ENCODE measurements at regions of chr7 and their contacts with region 1.

Region 1: GRCh38 chr7:152411389-152411788 is 24.4 kb downstream of the KMT2C start:
- DNase-seq: no peak
- ATAC-seq: peak in 3 of 4 donors; percentile 26 to 44 (median 27)
- H3K4me3 ChIP-seq: no peak overlapping the region
- H3K27ac ChIP-seq: no peak overlapping the region
- H3K4me1 ChIP-seq: peaks cover 0 to 5% (median 0%) of the 10 kb centered on the region in 3 donors
- H3K27me3 ChIP-seq: no peaks in the 10 kb centered on the region
- CTCF ChIP-seq: no peak

Region 2: DNA sequence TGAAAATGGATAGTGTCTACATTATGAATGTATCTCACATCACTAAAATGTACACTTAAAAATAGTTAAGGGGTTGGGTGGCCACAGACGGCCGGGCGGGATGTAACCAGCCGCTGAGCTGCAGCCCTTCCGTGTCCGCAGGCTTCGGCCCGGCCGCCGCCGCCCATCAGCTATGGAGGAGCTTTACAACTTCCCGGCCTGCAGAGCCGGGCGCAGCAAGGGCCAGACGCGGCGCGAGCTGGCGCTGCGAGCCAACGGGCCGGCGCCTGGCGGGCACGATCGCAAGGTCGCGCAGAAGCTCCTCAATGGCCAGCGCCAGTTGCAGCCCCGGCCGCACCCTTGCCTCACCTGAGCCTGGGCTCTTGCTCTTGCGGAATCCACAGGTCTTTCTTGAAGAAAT is 44.7 kb before region 1 on chr7:
- intact Hi-C with region 1: loop called in 1 of 3 experiments (anchors 10 kb)
- DNase-seq: peak in 2 of 6 donors; percentile 19 to 59
- ATAC-seq: peak in 2 of 4 donors; percentile 53 to 63
- H3K4me3 ChIP-seq: no peak overlapping the region
- H3K27ac ChIP-seq: no peak overlapping the region
- H3K4me1 ChIP-seq: peaks cover 15 to 31% (median 19%) of the 10 kb centered on the region in 3 donors
- H3K27me3 ChIP-seq: no peaks in the 10 kb centered on the region
- CTCF ChIP-seq: no peak